ENCODE measurements at regions of chr4 and their contacts with region 1.

Region 1: GRCh38 chr4:106369456-106370060 is 980 bp upstream of the GIMD1 start:
- DNase-seq: peak; percentile 7 to 37
- H3K4me3 ChIP-seq: no peak overlapping the region
- H3K27ac ChIP-seq: no peak overlapping the region
- H3K4me1 ChIP-seq: no peaks in the 10 kb centered on the region
- H3K27me3 ChIP-seq: no peaks in the 10 kb centered on the region
- CTCF ChIP-seq: peak; percentile 66

Region 2: GRCh38 chr4:106502106-106502699 is 132.6 kb after region 1 on chr4:
- CTCF ChIA-PET with region 1: no interaction called
- POLR2A ChIA-PET with region 1: no interaction called
- intact Hi-C with region 1: loop called (anchors 1 kb)
- DNase-seq: peak in 1 of 2 experiments; percentile 42
- H3K4me3 ChIP-seq: no peak overlapping the region
- H3K27ac ChIP-seq: no peak overlapping the region
- H3K4me1 ChIP-seq: no peaks in the 10 kb centered on the region
- H3K27me3 ChIP-seq: no peaks in the 10 kb centered on the region
- CTCF ChIP-seq: peak; percentile 67

Region 3: GRCh38 chr4:106746451-106746850 is 376.9 kb after region 1 on chr4:
- CTCF ChIA-PET with region 1: no interaction called
- POLR2A ChIA-PET with region 1: no interaction called
- intact Hi-C with region 1: no loop called
- DNase-seq: no peak
- H3K4me3 ChIP-seq: no peak overlapping the region
- H3K27ac ChIP-seq: no peak overlapping the region
- H3K4me1 ChIP-seq: no peaks in the 10 kb centered on the region
- H3K27me3 ChIP-seq: no peaks in the 10 kb centered on the region
- CTCF ChIP-seq: no peak

Region 4: GRCh38 chr4:106809076-106809475 is 439.5 kb after region 1 on chr4:
- CTCF ChIA-PET with region 1: no interaction called
- POLR2A ChIA-PET with region 1: no interaction called
- intact Hi-C with region 1: loop called (anchors 5 kb)
- DNase-seq: no peak
- H3K4me3 ChIP-seq: no peak overlapping the region
- H3K27ac ChIP-seq: no peak overlapping the region
- H3K4me1 ChIP-seq: no peaks in the 10 kb centered on the region
- H3K27me3 ChIP-seq: no peaks in the 10 kb centered on the region
- CTCF ChIP-seq: no peak

Region 5: GRCh38 chr4:106898621-106899230 is 529.2 kb after region 1 on chr4:
- CTCF ChIA-PET with region 1: no interaction called
- POLR2A ChIA-PET with region 1: no interaction called
- intact Hi-C with region 1: loop called (anchors 1 kb)
- DNase-seq: peak in 1 of 2 experiments; percentile 7
- H3K4me3 ChIP-seq: no peak overlapping the region
- H3K27ac ChIP-seq: no peak overlapping the region
- H3K4me1 ChIP-seq: no peaks in the 10 kb centered on the region
- H3K27me3 ChIP-seq: no peaks in the 10 kb centered on the region
- CTCF ChIP-seq: peak; percentile 68

Region 6: GRCh38 chr4:107183155-107183774 is 813.7 kb after region 1 on chr4:
- CTCF ChIA-PET with region 1: no interaction called
- POLR2A ChIA-PET with region 1: no interaction called
- intact Hi-C with region 1: loop called (anchors 5 kb)
- DNase-seq: peak in 1 of 2 experiments; percentile 35
- H3K4me3 ChIP-seq: no peak overlapping the region
- H3K27ac ChIP-seq: no peak overlapping the region
- H3K4me1 ChIP-seq: no peaks in the 10 kb centered on the region
- H3K27me3 ChIP-seq: no peaks in the 10 kb centered on the region
- CTCF ChIP-seq: peak; percentile 75

Region 7: GRCh38 chr4:107379054-107379869 is 1009.7 kb after region 1 on chr4:
- CTCF ChIA-PET with region 1: no interaction called
- POLR2A ChIA-PET with region 1: no interaction called
- intact Hi-C with region 1: loop called (anchors 10 kb)
- DNase-seq: no peak
- H3K4me3 ChIP-seq: no peak overlapping the region
- H3K27ac ChIP-seq: no peak overlapping the region
- H3K4me1 ChIP-seq: no peaks in the 10 kb centered on the region
- H3K27me3 ChIP-seq: no peaks in the 10 kb centered on the region
- CTCF ChIP-seq: no peak

Measured in PC-9 (cell line).